ENCODE measurements at regions of chr11 and their contacts with region 1.

Region 1: DNA sequence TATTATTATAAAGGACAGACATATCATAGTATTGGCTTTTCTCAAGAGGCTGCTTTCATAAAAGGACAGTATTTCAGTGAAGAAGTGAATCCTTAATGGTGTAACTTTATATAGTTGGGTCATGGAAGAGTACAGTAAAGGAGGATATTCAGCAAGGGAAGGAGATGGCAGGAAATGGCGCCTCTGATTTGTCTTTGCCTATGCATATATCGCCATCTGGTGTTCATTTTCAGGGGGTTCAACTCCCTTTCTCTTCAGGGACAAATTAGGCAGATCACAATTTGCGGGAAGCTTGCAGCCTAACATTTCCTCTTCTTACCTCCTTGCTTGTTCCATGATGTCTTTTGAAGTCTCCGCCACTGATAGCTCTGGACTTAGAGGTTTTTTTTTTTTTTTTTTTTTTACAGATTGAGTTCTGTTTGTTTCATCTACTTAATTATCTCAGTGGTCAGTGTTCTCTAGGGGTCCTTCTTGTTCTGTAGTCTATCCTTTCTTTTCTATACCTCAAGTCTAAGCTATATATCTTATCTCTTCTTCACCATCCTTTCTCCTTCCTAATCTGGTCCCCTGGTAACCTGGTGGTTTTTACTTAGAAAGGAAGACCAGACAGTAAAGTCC is 21.8 kb upstream of the RRM1 start:
- DNase-seq: peak; percentile 48
- H3K4me3 Mint-ChIP-seq: no peak overlapping the region
- H3K27ac Mint-ChIP-seq: peak overlapping the region; percentile 65
- H3K4me1 Mint-ChIP-seq: peaks cover 39% of the 10 kb centered on the region
- H3K27me3 Mint-ChIP-seq: no peaks in the 10 kb centered on the region

Region 2: DNA sequence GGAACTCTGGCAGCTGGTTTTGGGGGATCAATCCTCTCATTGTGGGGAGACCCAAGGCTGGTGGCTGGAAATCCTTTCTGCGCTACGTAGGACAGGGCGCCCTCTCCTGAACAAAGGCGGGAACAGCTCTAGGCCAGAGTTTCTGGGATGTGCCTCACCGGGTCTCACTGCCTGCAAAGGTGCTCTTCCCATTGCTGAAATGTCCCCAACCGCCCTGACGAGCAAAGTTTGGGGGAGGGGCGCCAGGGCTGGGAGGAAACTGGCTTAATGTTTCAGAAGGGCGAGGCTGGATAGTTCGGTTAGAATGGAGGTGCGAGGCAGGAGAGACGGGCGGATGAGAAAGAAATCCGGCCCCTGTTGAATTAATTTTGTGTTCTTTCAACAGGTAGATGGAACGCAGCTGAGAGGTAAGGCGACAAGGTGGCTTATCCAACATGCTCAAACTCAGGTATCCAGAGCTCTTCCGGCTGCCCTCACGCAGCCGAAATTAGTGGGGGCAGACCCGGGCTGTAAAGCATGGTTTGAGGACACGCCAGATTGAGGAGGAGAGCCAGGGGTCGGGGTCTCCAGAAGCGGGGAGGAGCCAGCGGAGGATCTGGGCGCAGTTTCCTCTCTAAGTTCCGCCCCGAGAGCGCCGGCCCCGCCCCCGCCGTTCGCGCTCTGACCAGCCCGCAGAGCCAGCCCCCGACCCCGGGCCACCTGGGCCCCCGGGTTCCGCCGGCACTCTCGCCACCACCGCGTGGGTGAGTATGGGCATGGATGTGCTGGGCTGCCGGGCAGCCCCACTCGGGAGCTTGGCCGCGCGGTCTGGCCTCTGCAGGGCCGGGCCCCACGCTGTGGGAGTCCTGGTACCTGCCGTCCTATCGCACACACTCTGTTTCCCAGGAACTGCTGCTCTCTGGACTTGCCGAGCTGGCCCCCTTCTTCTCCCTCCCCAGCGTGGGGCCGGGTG is 264.6 kb before region 1 on chr11 and contains the start of gene PGAP2:
- CTCF ChIA-PET with region 1: interaction called, 40 read pairs
- POLR2A ChIA-PET with region 1: no interaction called
- intact Hi-C with region 1: no loop called
- DNase-seq: peak; percentile 77
- H3K4me3 Mint-ChIP-seq: peak within 1 kb of the TSS; percentile 84
- H3K27ac Mint-ChIP-seq: peak within 1 kb of the TSS; percentile 80
- H3K4me1 Mint-ChIP-seq: peaks cover 19% of the 10 kb centered on the region
- H3K27me3 Mint-ChIP-seq: no peaks in the 10 kb centered on the region
- total RNA-seq, gene PGAP2: 27.4 to 30.2 TPM

Region 3: DNA sequence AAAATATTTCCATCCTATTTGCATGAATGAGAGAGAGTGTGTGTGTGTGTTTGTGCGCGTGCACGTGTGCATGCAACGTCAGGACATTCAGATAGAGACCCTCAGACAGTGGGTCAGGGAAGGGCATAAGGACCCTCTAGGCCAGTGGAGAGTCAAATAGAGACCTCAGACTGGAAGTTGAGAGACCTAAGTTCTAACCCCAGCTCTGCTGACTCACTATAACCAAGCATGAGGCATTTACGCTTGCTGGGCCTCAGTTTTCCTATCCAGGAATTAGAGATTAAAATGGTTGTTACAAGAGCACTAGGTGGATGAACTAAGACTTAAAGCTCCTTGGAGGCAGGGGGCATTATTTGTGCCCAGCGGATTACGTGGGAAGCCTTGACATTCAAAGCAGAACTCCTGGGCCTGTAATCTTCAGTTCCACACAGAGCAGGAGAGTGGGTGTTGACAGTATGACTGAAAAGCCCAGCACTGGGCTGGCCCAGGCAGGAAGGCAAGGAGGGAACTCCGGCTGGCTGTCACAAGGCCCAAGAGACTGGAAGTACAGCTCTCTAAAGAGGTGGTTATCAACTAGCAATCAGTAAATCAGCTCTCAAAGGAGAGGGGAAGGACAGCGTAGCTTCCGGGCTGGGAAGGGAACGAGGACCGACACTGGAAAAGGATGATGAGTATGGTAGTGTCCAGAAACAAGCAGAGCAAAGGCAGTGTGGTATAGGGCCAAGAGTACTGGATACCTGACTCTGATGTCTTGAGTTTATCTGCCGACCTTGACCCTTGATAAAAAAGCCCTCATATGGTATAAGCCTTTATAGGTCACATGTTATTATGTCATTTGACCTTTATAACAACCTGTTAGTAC is 241.2 kb before region 1 on chr11:
- CTCF ChIA-PET with region 1: interaction called, 756 read pairs
- POLR2A ChIA-PET with region 1: interaction called, 3 read pairs
- intact Hi-C with region 1: no loop called
- DNase-seq: peak; percentile 33
- H3K4me3 Mint-ChIP-seq: peak overlapping the region; percentile 53
- H3K27ac Mint-ChIP-seq: peak overlapping the region; percentile 92
- H3K4me1 Mint-ChIP-seq: peaks cover 75% of the 10 kb centered on the region
- H3K27me3 Mint-ChIP-seq: no peaks in the 10 kb centered on the region

Region 4: GRCh38 chr11:3867209-3868091 is 205.3 kb before region 1 on chr11:
- CTCF ChIA-PET with region 1: interaction called, 42 read pairs
- POLR2A ChIA-PET with region 1: no interaction called
- intact Hi-C with region 1: no loop called
- DNase-seq: peak; percentile 68
- H3K4me3 Mint-ChIP-seq: no peak overlapping the region
- H3K27ac Mint-ChIP-seq: peak overlapping the region; percentile 87
- H3K4me1 Mint-ChIP-seq: peaks cover 71% of the 10 kb centered on the region
- H3K27me3 Mint-ChIP-seq: no peaks in the 10 kb centered on the region

Region 5: GRCh38 chr11:3947061-3947460 is 125.7 kb before region 1 on chr11:
- CTCF ChIA-PET with region 1: interaction called, 14 read pairs
- POLR2A ChIA-PET with region 1: no interaction called
- intact Hi-C with region 1: no loop called
- DNase-seq: peak; percentile 69
- H3K4me3 Mint-ChIP-seq: peak overlapping the region; percentile 40
- H3K27ac Mint-ChIP-seq: peak overlapping the region; percentile 93
- H3K4me1 Mint-ChIP-seq: peaks cover 94% of the 10 kb centered on the region
- H3K27me3 Mint-ChIP-seq: no peaks in the 10 kb centered on the region

Region 6: DNA sequence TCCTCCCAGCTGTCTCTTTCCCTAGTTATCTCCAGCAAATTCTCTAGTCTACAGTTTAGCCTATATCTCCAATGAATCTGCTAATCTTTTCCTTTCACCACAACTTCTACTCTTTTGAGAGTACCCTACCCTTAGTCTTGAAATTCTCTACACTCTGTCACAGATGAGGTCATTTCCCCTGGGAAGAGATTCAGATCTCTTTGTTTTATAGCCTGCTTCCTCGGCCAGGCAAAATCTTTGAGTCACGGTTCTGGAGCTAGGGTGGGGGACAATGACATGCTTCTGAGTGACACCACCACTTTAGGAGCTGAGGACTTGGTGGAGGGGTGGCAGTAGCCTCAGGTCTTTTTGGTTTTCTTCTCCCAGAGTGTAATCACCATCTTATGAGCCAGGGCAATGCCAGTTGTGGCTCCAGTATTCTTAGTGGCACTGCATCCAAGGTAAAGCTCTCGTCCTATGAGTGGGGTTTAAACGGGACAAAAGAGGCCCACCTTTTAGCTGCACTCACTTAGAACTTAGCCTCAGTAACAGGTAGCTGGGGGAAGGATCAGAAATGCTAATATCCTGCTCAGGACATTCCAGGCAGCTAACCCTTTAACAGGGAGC is 76.7 kb before region 1 on chr11:
- CTCF ChIA-PET with region 1: interaction called, 11 read pairs
- POLR2A ChIA-PET with region 1: no interaction called
- intact Hi-C with region 1: no loop called
- DNase-seq: no peak
- H3K4me3 Mint-ChIP-seq: no peak overlapping the region
- H3K27ac Mint-ChIP-seq: no peak overlapping the region
- H3K4me1 Mint-ChIP-seq: peaks cover 33% of the 10 kb centered on the region
- H3K27me3 Mint-ChIP-seq: no peaks in the 10 kb centered on the region

Region 7: GRCh38 chr11:4086575-4087353 is 14.0 kb after region 1 on chr11:
- CTCF ChIA-PET with region 1: interaction called, 64 read pairs
- POLR2A ChIA-PET with region 1: no interaction called
- intact Hi-C with region 1: no loop called
- DNase-seq: no peak
- H3K4me3 Mint-ChIP-seq: no peak overlapping the region
- H3K27ac Mint-ChIP-seq: peak overlapping the region; percentile 59
- H3K4me1 Mint-ChIP-seq: peaks cover 51% of the 10 kb centered on the region
- H3K27me3 Mint-ChIP-seq: no peaks in the 10 kb centered on the region

Measured in activated CD4-positive, alpha-beta memory T cell treated with anti-CD3 and anti-CD28 coated beads for 36 hours (primary cell).